B cell (primary cell): ENCODE measurements at regions of chr9 and their contacts with region 1.

Region 1: GRCh38 chr9:123658792-123659191 is 271.1 kb downstream of the DENND1A start:
- DNase-seq: peak; percentile 65
- ATAC-seq: peak; percentile 79
- H3K4me3 ChIP-seq: peak overlapping the region in 1 of 5 experiments; percentile 34
- H3K4me3 Mint-ChIP-seq: peak overlapping the region; percentile 40
- H3K27ac ChIP-seq: peak overlapping the region; percentile 39 to 80
- H3K27ac Mint-ChIP-seq: peak overlapping the region; percentile 76
- H3K4me1 ChIP-seq: peaks cover 40 to 46% of the 10 kb centered on the region in 2 donors
- H3K4me1 Mint-ChIP-seq: peaks cover 46% of the 10 kb centered on the region
- H3K27me3 ChIP-seq: no peaks in the 10 kb centered on the region
- H3K27me3 Mint-ChIP-seq: no peaks in the 10 kb centered on the region
- CTCF ChIP-seq: no peak

Region 2: GRCh38 chr9:123485216-123485615 is 173.6 kb before region 1 on chr9:
- CTCF ChIA-PET with region 1: no interaction called
- POLR2A ChIA-PET with region 1: no interaction called
- intact Hi-C with region 1: no loop called
- DNase-seq: no peak
- ATAC-seq: no peak
- H3K4me3 ChIP-seq: no peak overlapping the region
- H3K4me3 Mint-ChIP-seq: no peak overlapping the region
- H3K27ac ChIP-seq: no peak overlapping the region
- H3K27ac Mint-ChIP-seq: no peak overlapping the region
- H3K4me1 ChIP-seq: no peaks in the 10 kb centered on the region
- H3K4me1 Mint-ChIP-seq: no peaks in the 10 kb centered on the region
- H3K27me3 ChIP-seq: no peaks in the 10 kb centered on the region
- H3K27me3 Mint-ChIP-seq: no peaks in the 10 kb centered on the region
- CTCF ChIP-seq: no peak

Region 3: DNA sequence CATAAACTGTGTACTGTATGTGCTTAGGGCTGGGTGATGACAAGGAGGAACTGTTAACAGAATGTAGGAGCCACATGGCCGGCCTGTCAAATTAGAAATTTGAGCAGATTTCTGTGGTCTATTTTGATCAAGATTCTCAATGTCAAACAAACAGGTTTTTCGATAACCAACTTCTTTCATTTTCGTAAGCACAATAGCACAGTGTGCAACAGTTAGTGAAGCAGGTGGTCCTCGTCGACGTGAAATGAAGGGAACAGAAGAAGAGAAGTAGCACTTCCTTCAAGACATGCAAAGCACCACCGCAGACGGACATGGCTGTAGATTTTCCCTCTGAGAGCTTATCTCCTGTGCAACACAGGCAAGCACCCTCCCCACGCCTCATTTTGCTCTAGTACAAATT is 50.7 kb before region 1 on chr9:
- CTCF ChIA-PET with region 1: no interaction called
- POLR2A ChIA-PET with region 1: no interaction called
- intact Hi-C with region 1: loop called (anchors 2 kb)
- DNase-seq: peak; percentile 79
- ATAC-seq: peak; percentile 96
- H3K4me3 ChIP-seq: peak overlapping the region in 2 of 5 experiments; percentile 17 to 22
- H3K4me3 Mint-ChIP-seq: peak overlapping the region; percentile 67
- H3K27ac ChIP-seq: peak overlapping the region; percentile 8 to 75
- H3K27ac Mint-ChIP-seq: peak overlapping the region; percentile 79
- H3K4me1 ChIP-seq: peaks cover 23 to 37% of the 10 kb centered on the region in 2 donors
- H3K4me1 Mint-ChIP-seq: peaks cover 53% of the 10 kb centered on the region
- H3K27me3 ChIP-seq: no peaks in the 10 kb centered on the region
- H3K27me3 Mint-ChIP-seq: no peaks in the 10 kb centered on the region
- CTCF ChIP-seq: no peak

Region 4: GRCh38 chr9:123637945-123638634 is 20.7 kb before region 1 on chr9:
- CTCF ChIA-PET with region 1: no interaction called
- POLR2A ChIA-PET with region 1: no interaction called
- intact Hi-C with region 1: no loop called
- DNase-seq: peak; percentile 33
- ATAC-seq: no peak
- H3K4me3 ChIP-seq: peak overlapping the region in 4 of 5 experiments; percentile 28 to 55 (median 45)
- H3K4me3 Mint-ChIP-seq: peak overlapping the region; percentile 77
- H3K27ac ChIP-seq: peak overlapping the region in 1 of 2 donors; percentile 61
- H3K27ac Mint-ChIP-seq: peak overlapping the region; percentile 11
- H3K4me1 ChIP-seq: peaks cover 11 to 14% of the 10 kb centered on the region in 2 donors
- H3K4me1 Mint-ChIP-seq: peaks cover 13% of the 10 kb centered on the region
- H3K27me3 ChIP-seq: no peaks in the 10 kb centered on the region
- H3K27me3 Mint-ChIP-seq: no peaks in the 10 kb centered on the region
- CTCF ChIP-seq: no peak

Region 5: GRCh38 chr9:123679322-123679987 is 20.7 kb after region 1 on chr9:
- CTCF ChIA-PET with region 1: no interaction called
- POLR2A ChIA-PET with region 1: no interaction called
- intact Hi-C with region 1: loop called (anchors 2 kb)
- DNase-seq: peak; percentile 63
- ATAC-seq: peak; percentile 87
- H3K4me3 ChIP-seq: peak overlapping the region in 2 of 5 experiments; percentile 27 to 53
- H3K4me3 Mint-ChIP-seq: peak overlapping the region; percentile 65
- H3K27ac ChIP-seq: peak overlapping the region; percentile 31 to 50
- H3K27ac Mint-ChIP-seq: peak overlapping the region; percentile 91
- H3K4me1 ChIP-seq: peaks cover 23 to 40% of the 10 kb centered on the region in 2 donors
- H3K4me1 Mint-ChIP-seq: peaks cover 47% of the 10 kb centered on the region
- H3K27me3 ChIP-seq: no peaks in the 10 kb centered on the region
- H3K27me3 Mint-ChIP-seq: no peaks in the 10 kb centered on the region
- CTCF ChIP-seq: no peak

Region 6: DNA sequence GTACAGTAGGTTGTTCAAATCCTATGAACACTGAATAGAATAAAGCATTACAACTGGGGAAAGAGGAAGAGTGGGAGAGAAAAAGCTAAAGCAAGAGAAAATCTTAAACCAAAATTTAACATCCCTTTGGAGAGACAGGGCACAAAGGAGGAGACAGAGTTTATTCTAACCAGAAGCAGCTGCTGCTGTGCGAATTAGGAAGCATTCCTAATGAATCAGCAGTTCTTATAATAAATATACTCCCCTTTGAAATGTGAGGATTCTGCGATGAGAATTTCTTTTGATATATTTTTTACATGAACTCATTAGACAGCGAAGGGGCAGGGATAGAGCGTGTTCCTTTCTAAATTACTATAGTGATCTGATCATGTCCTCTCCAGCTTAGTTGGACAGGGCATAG is 37.7 kb after region 1 on chr9:
- CTCF ChIA-PET with region 1: no interaction called
- POLR2A ChIA-PET with region 1: interaction called, 3 read pairs
- intact Hi-C with region 1: loop called (anchors 5 kb)
- DNase-seq: no peak
- ATAC-seq: no peak
- H3K4me3 ChIP-seq: no peak overlapping the region
- H3K4me3 Mint-ChIP-seq: no peak overlapping the region
- H3K27ac ChIP-seq: no peak overlapping the region
- H3K27ac Mint-ChIP-seq: no peak overlapping the region
- H3K4me1 ChIP-seq: peaks cover 15 to 20% of the 10 kb centered on the region in 2 donors
- H3K4me1 Mint-ChIP-seq: peaks cover 36% of the 10 kb centered on the region
- H3K27me3 ChIP-seq: no peaks in the 10 kb centered on the region
- H3K27me3 Mint-ChIP-seq: no peaks in the 10 kb centered on the region
- CTCF ChIP-seq: no peak